ENCODE measurements at regions of chr14 and their contacts with region 1.

Region 1: DNA sequence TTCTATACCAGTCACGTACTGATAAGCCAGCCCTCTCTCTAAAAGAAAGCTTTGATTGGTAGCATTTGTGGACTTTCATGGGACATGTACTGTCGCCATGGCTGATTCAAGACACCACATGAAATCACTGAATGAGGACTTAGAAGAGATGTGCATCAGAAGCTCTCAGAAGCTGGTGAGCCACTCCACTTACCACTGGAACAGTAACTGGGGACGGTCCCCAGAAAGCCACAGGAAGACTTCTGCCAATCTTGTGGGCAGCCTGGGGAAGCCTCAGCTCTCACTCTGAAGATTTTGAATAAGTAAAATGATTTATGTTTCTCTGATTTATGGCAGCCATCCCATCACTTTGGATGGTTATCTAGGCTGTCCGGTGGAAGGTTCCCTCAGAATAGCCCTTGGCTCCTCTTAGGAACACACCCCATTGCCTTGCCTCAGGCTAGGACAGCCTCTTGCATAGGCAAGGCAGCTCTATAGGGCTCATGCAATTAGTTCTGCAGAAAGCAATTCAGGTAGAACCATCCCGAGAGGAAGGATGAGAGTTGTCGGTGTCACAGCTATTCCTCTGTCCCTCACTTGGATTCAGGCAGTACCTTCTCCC is 9.8 kb downstream of the DHRS1 start:
- DNase-seq: peak; percentile 93
- H3K4me3 Mint-ChIP-seq: no peak overlapping the region
- H3K27ac Mint-ChIP-seq: peak overlapping the region; percentile 75
- H3K4me1 Mint-ChIP-seq: peaks cover 25% of the 10 kb centered on the region
- H3K27me3 Mint-ChIP-seq: no peaks in the 10 kb centered on the region

Region 2: DNA sequence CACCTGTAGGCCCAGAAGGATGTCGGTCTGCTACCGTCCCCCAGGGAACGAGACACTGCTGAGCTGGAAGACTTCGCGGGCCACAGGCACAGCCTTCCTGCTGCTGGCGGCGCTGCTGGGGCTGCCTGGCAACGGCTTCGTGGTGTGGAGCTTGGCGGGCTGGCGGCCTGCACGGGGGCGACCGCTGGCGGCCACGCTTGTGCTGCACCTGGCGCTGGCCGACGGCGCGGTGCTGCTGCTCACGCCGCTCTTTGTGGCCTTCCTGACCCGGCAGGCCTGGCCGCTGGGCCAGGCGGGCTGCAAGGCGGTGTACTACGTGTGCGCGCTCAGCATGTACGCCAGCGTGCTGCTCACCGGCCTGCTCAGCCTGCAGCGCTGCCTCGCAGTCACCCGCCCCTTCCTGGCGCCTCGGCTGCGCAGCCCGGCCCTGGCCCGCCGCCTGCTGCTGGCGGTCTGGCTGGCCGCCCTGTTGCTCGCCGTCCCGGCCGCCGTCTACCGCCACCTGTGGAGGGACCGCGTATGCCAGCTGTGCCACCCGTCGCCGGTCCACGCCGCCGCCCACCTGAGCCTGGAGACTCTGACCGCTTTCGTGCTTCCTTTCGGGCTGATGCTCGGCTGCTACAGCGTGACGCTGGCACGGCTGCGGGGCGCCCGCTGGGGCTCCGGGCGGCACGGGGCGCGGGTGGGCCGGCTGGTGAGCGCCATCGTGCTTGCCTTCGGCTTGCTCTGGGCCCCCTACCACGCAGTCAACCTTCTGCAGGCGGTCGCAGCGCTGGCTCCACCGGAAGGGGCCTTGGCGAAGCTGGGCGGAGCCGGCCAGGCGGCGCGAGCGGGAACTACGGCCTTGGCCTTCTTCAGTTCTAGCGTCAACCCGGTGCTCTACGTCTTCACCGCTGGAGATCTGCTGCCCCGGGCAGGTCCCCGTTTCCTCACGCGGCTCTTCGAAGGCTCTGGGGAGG is 21.2 kb after region 1 on chr14 and contains the start of gene LTB4R:
- CTCF ChIA-PET with region 1: interaction called, 39 read pairs
- intact Hi-C with region 1: no loop called
- DNase-seq: peak; percentile 71
- H3K4me3 Mint-ChIP-seq: peak within 1 kb of the TSS; percentile 71
- H3K27ac Mint-ChIP-seq: peak within 1 kb of the TSS; percentile 68
- H3K4me1 Mint-ChIP-seq: peaks cover 64% of the 10 kb centered on the region
- H3K27me3 Mint-ChIP-seq: no peaks in the 10 kb centered on the region
- total RNA-seq, gene LTB4R: 10.6 to 11.4 TPM